ENCODE measurements at regions of chr17 and their contacts with region 1.

Region 1: DNA sequence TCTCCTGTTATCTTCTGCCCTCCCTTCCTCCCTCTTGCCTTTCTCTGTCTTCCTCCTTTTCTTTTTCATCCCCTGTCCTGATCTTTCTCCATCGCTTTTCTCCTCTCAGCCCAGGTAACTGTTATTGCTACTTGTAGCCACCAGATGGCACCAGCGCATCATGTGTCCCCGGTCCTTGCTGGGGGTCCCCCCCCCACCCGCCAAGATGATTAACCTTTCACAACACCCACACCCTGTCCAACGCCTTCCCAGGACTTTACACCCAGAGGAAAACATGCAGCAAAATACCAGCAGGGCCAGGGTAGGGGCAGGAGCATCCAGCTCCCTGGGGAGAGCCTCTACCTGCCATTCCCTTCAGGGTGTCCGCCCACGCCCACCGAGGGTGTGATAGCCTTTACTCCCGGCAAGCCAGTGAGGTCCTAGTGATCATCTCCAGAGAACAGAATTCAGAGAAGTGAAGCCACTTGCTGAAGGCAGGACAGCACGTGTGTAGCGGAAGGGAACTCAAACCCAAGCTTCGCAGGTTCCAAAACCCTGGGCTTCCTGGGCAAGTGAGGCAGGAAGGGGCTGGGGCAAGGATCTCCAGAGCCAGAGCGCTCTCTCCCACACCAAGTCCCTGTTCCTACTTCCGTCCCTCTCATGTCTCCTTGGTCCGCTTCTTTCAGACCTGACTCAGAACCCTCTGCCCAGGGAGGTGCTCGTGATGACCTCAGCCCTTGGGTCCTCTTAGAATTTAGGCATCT is 13.5 kb upstream of the TAC4 start:
- DNase-seq: peak; percentile 64
- ATAC-seq: peak; percentile 40
- H3K4me3 ChIP-seq: peak overlapping the region in 1 of 3 experiments; percentile 2; a peak in 1 of 6 replicates
- H3K27ac ChIP-seq: no peak overlapping the region
- H3K4me1 ChIP-seq: peaks cover 55% of the 10 kb centered on the region
- H3K27me3 ChIP-seq: peaks cover 0 to 11% of the 10 kb centered on the region in 2 experiments; a peak in 1 of 5 replicates
- CTCF ChIP-seq: peak; percentile 99
- EP300 ChIP-seq: 0 out of 4 replicates have a peak, but pooled peaks of 1 of the 2 experiments have one; percentile 27
- POLR2A ChIP-seq: no peak
- RAD21 ChIP-seq: peak; percentile 98

Region 2: DNA sequence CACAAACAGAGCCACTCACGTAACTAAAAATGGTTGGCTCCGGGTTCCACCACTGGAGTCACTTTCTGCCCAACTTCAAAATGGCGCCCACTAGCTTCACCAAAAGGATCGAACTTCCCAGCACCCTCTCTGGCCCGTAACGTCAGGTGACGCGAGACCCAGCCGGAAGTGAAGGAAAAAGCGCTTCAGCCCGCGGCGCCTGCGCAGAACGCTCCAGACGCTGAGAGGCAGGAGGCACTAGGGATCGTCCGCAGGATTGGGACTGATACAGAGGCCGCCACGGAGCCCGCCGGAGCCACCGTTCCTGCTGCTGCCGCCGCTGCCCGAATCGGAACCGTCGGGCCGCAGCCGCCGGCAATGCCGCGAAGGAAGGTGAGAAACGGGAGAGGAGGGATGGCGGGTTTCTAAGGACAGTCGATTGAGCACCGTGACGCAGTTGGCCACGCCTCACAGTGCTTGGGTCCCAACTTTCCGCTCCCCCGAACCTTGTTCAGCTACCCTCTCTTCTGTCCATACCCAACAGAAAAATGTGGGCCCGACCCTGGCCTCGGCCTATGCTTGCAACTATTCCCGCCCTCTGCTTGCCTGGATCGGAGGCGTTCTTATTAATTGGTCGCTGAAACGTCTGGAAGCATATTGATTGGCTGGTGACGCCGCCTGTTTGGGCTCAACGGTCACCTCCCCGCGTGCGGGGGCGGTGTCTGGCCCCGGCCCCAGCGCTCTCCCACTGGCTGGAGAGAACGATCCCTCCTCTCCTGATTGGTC is 72.7 kb before region 1 on chr17 and contains the start of gene KAT7:
- CTCF ChIA-PET with region 1: no interaction called
- POLR2A ChIA-PET with region 1: no interaction called
- in situ Hi-C with region 1: no loop called
- intact Hi-C with region 1: no loop called
- DNase-seq: peak; percentile 99
- ATAC-seq: peak; percentile 98
- H3K4me3 ChIP-seq: peak within 1 kb of the TSS; percentile 82 to 100 (median 97)
- H3K27ac ChIP-seq: peak within 1 kb of the TSS; percentile 98
- H3K4me1 ChIP-seq: peaks cover 26% of the 10 kb centered on the region
- H3K27me3 ChIP-seq: no peaks in the 10 kb centered on the region
- CTCF ChIP-seq: no peak; the same call in 1 of the 2 replicates
- EP300 ChIP-seq: no peak; a peak in 1 of 4 replicates
- POLR2A ChIP-seq: peak; percentile 94 to 99
- RAD21 ChIP-seq: peak; percentile 47; the same call in 1 of the 2 replicates
- total RNA-seq, gene KAT7: 39.2 and 43.8 TPM in 2 replicates

Region 3: DNA sequence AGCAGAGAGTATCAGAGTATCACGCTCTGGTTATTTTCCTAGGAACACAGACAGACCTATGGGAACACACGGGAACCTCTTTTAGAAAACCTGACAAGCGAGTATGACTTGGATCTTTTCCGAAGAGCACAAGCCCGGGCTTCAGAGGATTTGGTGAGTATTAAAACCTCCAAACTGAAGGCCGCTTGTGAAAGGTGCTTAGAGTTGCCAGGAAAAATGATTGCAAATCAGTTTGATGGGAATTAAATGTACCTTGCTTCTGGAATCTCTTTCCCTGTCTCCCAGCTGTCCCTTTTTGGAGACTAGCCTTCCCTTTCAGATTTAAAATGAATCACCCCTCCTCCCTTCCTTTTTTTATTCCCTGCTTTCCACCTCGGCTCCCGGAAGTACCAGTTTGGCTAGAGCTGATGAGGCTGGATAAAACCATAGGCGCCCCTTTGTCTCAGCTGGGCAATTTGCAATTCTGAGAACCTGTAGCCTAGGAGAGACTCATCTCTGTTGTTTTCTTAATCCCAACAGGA is 45.5 kb before region 1 on chr17:
- CTCF ChIA-PET with region 1: no interaction called
- POLR2A ChIA-PET with region 1: no interaction called
- in situ Hi-C with region 1: no loop called
- intact Hi-C with region 1: no loop called
- DNase-seq: no peak
- ATAC-seq: no peak
- H3K4me3 ChIP-seq: no peak overlapping the region
- H3K27ac ChIP-seq: no peak overlapping the region
- H3K4me1 ChIP-seq: no peaks in the 10 kb centered on the region
- H3K27me3 ChIP-seq: no peaks in the 10 kb centered on the region
- CTCF ChIP-seq: no peak
- EP300 ChIP-seq: no peak
- POLR2A ChIP-seq: no peak
- RAD21 ChIP-seq: no peak

Region 4: GRCh38 chr17:49944273-49944890 is 83.1 kb after region 1 on chr17:
- CTCF ChIA-PET with region 1: no interaction called
- POLR2A ChIA-PET with region 1: no interaction called
- in situ Hi-C with region 1: no loop called
- intact Hi-C with region 1: no loop called
- DNase-seq: no peak
- ATAC-seq: peak; percentile 13; the same call in 1 of the 3 replicates
- H3K4me3 ChIP-seq: no peak overlapping the region; a peak in 1 of 6 replicates
- H3K27ac ChIP-seq: no peak overlapping the region
- H3K4me1 ChIP-seq: peaks cover 69% of the 10 kb centered on the region
- H3K27me3 ChIP-seq: peaks cover 10 to 71% of the 10 kb centered on the region in 2 experiments; a peak in 4 of 5 replicates
- CTCF ChIP-seq: no peak
- EP300 ChIP-seq: no peak
- POLR2A ChIP-seq: no peak
- RAD21 ChIP-seq: no peak

Region 5: DNA sequence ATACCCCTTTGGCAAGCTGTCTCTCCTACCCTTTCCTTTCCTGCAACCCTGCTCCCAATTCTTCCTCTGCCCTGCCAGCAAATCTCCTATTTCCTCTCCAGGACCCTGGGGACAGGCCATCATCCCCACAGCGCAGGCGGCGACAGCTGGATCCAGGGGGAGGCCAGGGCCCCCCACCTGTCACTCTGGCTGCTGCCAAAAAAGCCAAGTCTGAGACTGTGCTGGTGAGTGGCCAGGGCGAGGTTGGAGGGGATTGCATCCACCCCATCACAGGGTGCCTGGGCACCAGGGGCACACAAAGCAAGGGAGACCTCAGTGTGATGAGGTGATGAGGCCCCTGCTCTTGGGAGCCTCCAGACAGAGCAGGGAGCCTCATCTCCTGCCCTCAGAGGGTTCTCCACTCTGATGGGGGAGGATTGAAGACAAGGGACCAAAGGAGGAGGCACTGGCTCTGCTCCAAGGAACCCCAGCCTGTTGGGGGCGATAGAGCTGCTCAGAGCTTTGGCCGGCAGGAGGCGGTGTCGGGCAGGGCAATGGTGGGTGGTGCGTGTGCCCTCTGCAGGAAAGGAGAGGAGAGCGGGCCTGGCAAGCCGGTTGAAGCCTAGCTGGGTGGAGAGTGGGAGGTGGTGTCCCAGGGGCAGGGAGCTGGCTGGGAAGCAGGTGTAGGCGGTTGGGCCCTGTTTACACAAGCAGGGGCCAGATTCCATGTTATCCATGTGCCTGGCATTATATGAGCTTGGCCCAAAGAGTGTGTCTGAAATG is 218.2 kb after region 1 on chr17:
- CTCF ChIA-PET with region 1: interaction called, 12 read pairs
- POLR2A ChIA-PET with region 1: no interaction called
- in situ Hi-C with region 1: loop called (anchors 10 kb)
- intact Hi-C with region 1: loop called (anchors 10 kb)
- DNase-seq: peak; percentile 75
- ATAC-seq: peak; percentile 92
- H3K4me3 ChIP-seq: no peak overlapping the region
- H3K27ac ChIP-seq: no peak overlapping the region
- H3K4me1 ChIP-seq: no peaks in the 10 kb centered on the region
- H3K27me3 ChIP-seq: peaks cover 0 to 13% of the 10 kb centered on the region in 2 experiments; a peak in 1 of 5 replicates
- CTCF ChIP-seq: peak; percentile 96
- EP300 ChIP-seq: no peak
- POLR2A ChIP-seq: no peak
- RAD21 ChIP-seq: peak; percentile 90

Region 6: GRCh38 chr17:50087246-50087911 is 226.1 kb after region 1 on chr17:
- CTCF ChIA-PET with region 1: interaction called, 4 read pairs
- POLR2A ChIA-PET with region 1: no interaction called
- in situ Hi-C with region 1: loop called (anchors 10 kb)
- intact Hi-C with region 1: loop called (anchors 10 kb)
- DNase-seq: peak; percentile 66
- ATAC-seq: peak; percentile 96
- H3K4me3 ChIP-seq: no peak overlapping the region
- H3K27ac ChIP-seq: no peak overlapping the region
- H3K4me1 ChIP-seq: no peaks in the 10 kb centered on the region
- H3K27me3 ChIP-seq: peaks cover 6 to 22% of the 10 kb centered on the region in 2 experiments; a peak in 4 of 5 replicates
- CTCF ChIP-seq: peak; percentile 100
- EP300 ChIP-seq: no peak
- POLR2A ChIP-seq: no peak
- RAD21 ChIP-seq: peak; percentile 94